ENCODE measurements at regions of chr3 and their contacts with region 1.

Region 1: DNA sequence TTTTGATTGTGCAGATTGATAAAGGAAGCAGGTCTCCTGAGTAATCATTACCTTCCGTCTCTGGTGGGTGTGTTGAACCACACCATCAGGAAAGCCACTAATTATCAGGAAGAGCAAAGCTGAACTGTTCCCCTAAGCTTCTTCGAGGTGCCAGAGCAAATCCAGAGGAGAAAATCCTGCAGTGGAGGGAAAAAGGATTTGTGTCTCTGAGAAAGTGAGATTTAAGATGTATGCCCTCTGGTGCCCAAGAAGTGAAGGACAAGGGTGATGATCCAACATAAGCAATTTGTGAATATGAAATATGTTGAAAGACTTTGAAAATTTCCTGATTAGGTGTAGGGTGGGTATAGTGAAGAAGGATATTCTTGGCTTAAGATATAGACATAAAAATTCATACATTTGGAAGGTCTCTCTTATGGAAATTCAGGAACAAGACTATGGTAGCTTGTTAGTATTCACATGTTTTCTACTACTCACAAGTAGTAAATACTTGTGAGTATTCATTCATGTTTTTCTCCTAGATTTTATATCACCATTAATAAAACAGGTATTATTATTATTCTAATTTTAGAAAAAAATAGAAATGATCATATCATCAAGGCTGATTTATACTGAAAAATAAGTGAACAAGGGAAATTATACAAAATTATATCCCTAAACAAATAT is 34.8 kb downstream of the COMMD2 start:
- DNase-seq: peak; percentile 61
- H3K4me3 ChIP-seq: no peak overlapping the region
- H3K27ac ChIP-seq: no peak overlapping the region
- H3K4me1 ChIP-seq: no peaks in the 10 kb centered on the region
- H3K27me3 ChIP-seq: no peaks in the 10 kb centered on the region
- CTCF ChIP-seq: peak; percentile 81
- EP300 ChIP-seq: no peak
- RAD21 ChIP-seq: peak; percentile 76

Region 2: DNA sequence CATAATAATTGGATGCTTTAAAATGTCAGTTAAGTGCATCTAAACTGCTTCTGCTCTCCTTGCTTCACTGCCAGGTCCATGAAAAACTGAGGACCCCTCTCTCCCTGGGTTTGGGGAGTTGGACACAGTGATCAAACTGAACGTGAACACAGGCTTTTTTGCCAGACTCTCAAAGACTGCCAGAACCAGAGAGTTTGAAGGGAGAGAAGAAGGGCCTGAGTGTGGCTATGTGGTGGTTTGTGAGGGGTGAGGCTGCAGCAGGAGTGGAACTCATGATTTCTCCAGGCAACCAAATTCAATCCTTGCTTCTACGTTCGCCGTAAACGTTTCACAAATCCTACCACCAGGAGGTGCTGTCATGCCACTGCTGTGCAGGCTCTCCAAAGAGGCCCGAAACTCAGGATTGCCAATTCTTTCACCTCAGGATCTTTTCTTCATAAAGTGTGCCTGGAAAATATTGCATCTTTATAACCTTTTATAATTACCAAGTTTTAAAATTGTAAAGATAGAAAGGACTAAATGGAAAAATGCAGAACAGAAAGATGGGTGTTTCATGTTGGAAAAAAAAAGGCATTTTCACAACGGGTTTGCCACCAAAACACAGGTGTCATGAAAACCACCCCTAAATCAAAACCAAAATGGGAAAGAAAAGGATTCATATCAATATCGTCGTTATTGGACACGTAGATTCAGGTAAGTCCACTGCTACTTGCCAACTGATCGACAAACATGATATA is 223.3 kb before region 1 on chr3:
- CTCF ChIA-PET with region 1: interaction called, 13 read pairs
- POLR2A ChIA-PET with region 1: no interaction called
- DNase-seq: peak; percentile 53
- H3K4me3 ChIP-seq: no peak overlapping the region
- H3K27ac ChIP-seq: no peak overlapping the region
- H3K4me1 ChIP-seq: peaks cover 0 to 4% of the 10 kb centered on the region in 2 experiments; a peak in 2 of 4 replicates
- H3K27me3 ChIP-seq: no peaks in the 10 kb centered on the region
- CTCF ChIP-seq: peak; percentile 92
- EP300 ChIP-seq: no peak
- RAD21 ChIP-seq: peak; percentile 82

Region 3: GRCh38 chr3:149523512-149524299 is 193.8 kb before region 1 on chr3:
- CTCF ChIA-PET with region 1: interaction called, 10 read pairs
- POLR2A ChIA-PET with region 1: no interaction called
- DNase-seq: no peak
- H3K4me3 ChIP-seq: no peak overlapping the region
- H3K27ac ChIP-seq: no peak overlapping the region
- H3K4me1 ChIP-seq: peaks cover 0 to 7% of the 10 kb centered on the region in 2 experiments; a peak in 2 of 4 replicates
- H3K27me3 ChIP-seq: no peaks in the 10 kb centered on the region
- CTCF ChIP-seq: no peak
- EP300 ChIP-seq: no peak
- RAD21 ChIP-seq: no peak

Region 4: DNA sequence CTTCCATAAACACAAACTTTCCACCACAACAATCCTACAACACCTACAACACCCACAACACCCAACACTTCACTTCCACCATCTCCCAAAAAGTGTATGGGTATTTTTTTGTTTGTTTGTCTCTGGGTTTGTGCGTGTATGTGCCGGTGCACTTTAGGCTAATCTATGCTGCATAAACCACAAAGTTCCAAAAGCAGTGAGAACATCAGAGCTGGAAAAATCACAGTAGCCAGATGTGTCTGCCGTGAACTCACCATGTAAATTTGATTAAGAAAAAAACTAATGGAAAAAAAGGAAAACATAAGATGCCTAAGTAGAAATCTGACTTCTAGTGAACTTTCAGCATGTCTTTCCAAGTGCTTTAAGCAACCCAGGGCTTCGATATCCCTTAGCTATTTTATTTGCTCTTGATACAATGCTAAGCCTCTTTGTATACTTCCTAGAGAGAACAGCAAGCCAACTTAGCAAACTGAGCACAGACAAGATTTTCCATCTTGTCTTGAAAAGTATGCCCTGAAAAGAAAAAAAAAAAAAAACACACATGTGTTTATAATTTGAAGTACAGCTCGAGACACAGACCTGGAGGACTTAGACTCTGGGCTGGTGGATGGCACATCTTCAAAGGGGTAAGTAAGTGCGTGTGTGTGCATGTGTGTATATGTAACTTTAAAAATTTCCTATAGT is 151.1 kb before region 1 on chr3:
- CTCF ChIA-PET with region 1: interaction called, 11 read pairs
- POLR2A ChIA-PET with region 1: no interaction called
- DNase-seq: no peak
- H3K4me3 ChIP-seq: no peak overlapping the region
- H3K27ac ChIP-seq: peak overlapping the region; percentile 48; a peak in 3 of 4 replicates
- H3K4me1 ChIP-seq: peaks cover 0 to 21% of the 10 kb centered on the region in 2 experiments
- H3K27me3 ChIP-seq: no peaks in the 10 kb centered on the region
- CTCF ChIP-seq: no peak
- EP300 ChIP-seq: no peak
- RAD21 ChIP-seq: no peak

Region 5: GRCh38 chr3:149702691-149703441 is 14.7 kb before region 1 on chr3:
- CTCF ChIA-PET with region 1: interaction called, 23 read pairs
- POLR2A ChIA-PET with region 1: no interaction called
- DNase-seq: no peak
- H3K4me3 ChIP-seq: no peak overlapping the region
- H3K27ac ChIP-seq: peak overlapping the region; percentile 45 to 79; a peak in 3 of 4 replicates
- H3K4me1 ChIP-seq: peaks cover 2 to 9% of the 10 kb centered on the region in 2 experiments; a peak in 2 of 4 replicates
- H3K27me3 ChIP-seq: no peaks in the 10 kb centered on the region
- CTCF ChIP-seq: no peak
- EP300 ChIP-seq: peak in 1 of 2 experiments; percentile 12; a peak in 1 of 4 replicates
- RAD21 ChIP-seq: no peak

Region 6: DNA sequence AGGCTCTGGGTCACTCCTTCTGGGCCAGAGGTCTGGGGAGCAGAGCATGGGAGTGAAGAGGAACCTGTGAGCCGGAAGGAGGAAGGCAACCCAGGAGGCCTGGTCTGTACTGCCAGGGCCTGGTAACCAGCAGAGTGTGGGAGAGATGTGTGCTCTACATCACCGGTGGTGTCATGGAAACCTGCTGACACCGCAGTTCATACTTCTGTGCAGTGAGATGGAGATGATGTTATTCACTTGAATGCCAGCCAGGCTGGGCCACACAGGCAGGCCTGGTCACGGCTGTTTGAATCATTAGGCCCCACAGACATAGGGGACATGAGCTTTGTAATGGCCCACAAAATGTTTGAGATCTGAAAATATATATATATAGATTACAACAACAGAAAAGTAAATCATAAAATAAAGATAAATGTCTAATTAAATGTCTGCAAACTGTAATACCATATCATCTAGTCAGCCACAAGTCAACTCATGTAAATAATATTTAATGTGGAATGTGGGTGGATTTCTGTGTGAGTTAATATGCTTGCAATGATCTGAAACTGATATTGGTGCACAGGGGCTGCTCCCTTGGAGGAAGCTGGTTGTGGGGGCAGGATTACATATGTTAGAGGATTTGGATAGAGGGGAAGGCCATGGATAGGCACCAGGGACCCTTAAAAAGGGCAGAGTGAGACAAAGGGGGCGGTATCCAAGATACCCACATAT is 361.7 kb after region 1 on chr3:
- CTCF ChIA-PET with region 1: no interaction called
- POLR2A ChIA-PET with region 1: no interaction called
- DNase-seq: peak; percentile 38
- H3K4me3 ChIP-seq: no peak overlapping the region
- H3K27ac ChIP-seq: peak overlapping the region; percentile 86 to 98
- H3K4me1 ChIP-seq: peaks cover 24 to 41% of the 10 kb centered on the region in 2 experiments
- H3K27me3 ChIP-seq: no peaks in the 10 kb centered on the region
- CTCF ChIP-seq: no peak
- EP300 ChIP-seq: peak in 1 of 2 experiments; percentile 47; a peak in 1 of 4 replicates
- RAD21 ChIP-seq: no peak